ENCODE measurements at regions of chr6 and their contacts with region 1.

Region 1: DNA sequence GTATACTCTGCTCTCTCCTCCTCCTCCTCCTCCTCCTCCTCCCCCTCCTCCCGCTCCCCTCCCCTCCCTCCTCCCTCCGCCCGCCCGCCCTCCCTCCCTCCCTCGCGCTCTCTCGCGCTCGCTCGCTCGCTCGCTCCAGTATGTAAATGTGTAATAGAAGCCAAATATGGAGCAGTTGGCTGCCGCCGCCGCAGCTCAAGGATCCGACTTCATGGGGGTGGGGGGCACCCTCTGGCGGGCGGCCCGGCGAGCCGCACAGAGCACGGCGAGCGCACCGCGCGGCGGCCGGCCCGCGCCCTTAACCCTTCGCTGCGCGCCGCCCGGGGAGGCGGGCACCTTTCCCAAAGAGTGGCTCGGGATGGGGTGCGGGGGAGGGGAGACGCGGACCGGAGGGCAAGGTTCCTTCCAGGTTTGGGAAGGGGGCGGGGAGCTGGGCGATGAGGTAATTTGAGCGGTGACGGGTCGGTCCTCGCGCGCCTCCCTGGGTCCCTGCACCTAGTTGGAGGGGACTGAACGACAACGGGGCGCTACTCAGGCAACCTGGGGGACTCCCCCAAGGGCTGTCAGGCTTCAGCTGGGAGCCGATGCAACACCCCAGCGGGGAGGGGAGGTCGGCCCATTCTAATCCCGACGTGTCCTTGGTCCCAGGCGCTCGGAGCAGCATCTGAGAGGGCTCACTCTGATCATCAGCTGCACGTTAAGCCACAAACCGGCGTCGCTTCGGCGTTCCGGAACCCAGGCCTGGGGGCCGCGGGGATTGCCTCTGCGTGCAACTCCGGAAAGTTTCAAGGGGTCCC is 409 bp upstream of the ATXN1 start:
- DNase-seq: peak; percentile 84 to 90
- ATAC-seq: peak; percentile 49 to 70 (median 60)
- H3K4me3 ChIP-seq: peak overlapping the region; percentile 67 to 90 (median 86)
- H3K27ac ChIP-seq: peak overlapping the region; percentile 92 to 99 (median 98)
- H3K4me1 ChIP-seq: peaks cover 0 to 57% (median 39%) of the 10 kb centered on the region in 9 donors
- H3K27me3 ChIP-seq: no peaks in the 10 kb centered on the region
- CTCF ChIP-seq: peak in 7 of 9 donors; percentile 8 to 55 (median 30)

Region 2: GRCh38 chr6:16338577-16339262 is 422.9 kb before region 1 on chr6:
- intact Hi-C with region 1: loop called in 9 of 10 experiments (anchors 2 to 10 kb)
- DNase-seq: peak; percentile 51 to 54
- ATAC-seq: peak in 6 of 8 donors; percentile 19 to 53 (median 38)
- H3K4me3 ChIP-seq: no peak overlapping the region
- H3K27ac ChIP-seq: peak overlapping the region in 2 of 10 donors; percentile 23 to 31
- H3K4me1 ChIP-seq: peaks cover 11 to 71% (median 42%) of the 10 kb centered on the region in 9 donors
- H3K27me3 ChIP-seq: no peaks in the 10 kb centered on the region
- CTCF ChIP-seq: peak; percentile 11 to 64 (median 48)

Region 3: DNA sequence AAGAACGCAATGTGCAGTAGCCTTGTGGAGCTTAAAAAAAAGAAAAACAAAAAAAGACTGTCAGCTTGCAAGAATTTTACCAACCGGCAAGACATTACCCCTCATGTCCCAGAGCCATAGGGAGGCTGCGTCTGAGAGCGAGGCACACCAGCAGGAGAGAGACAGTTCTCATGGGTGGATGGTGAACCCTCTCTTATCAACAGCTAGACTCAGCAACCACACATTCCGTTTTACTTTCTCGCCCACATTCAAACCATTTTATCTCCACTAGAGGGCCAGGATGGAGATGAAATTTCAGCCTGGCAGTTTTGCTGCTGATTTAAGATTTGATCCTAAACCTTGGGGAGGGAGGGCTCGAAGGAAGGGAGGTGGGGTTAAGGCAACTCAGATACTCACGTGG is 247.4 kb before region 1 on chr6:
- intact Hi-C with region 1: loop called (anchors 2 to 10 kb)
- DNase-seq: no peak
- ATAC-seq: peak in 5 of 8 donors; percentile 10 to 51 (median 34)
- H3K4me3 ChIP-seq: no peak overlapping the region
- H3K27ac ChIP-seq: no peak overlapping the region
- H3K4me1 ChIP-seq: peaks cover 4 to 57% (median 39%) of the 10 kb centered on the region in 9 donors
- H3K27me3 ChIP-seq: no peaks in the 10 kb centered on the region
- CTCF ChIP-seq: peak in 7 of 9 donors; percentile 36 to 54 (median 51)

Region 4: DNA sequence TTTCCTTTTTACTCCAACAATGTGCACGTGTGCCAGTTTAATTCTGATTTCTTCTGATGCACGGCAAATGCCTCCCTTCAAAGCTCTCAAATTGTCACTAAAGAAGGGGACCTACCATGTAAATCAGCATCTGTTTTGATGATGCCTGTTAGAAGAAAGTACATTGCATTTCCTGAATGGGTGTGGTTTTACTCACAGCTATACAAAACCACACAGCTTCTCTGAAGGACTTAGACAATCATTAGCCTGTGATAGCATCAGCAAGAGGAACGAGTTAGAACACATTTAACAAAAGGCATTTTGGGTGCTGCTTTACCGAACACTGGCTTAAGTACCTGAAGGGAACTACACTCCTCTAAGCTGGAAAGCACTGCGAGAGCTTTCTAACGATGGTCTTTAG is 109.8 kb before region 1 on chr6:
- intact Hi-C with region 1: loop called in 2 of 10 experiments (anchors 10 kb)
- DNase-seq: no peak
- ATAC-seq: no peak
- H3K4me3 ChIP-seq: no peak overlapping the region
- H3K27ac ChIP-seq: peak overlapping the region in 1 of 10 donors; percentile 62
- H3K4me1 ChIP-seq: peaks cover 0 to 27% (median 0%) of the 10 kb centered on the region in 9 donors
- H3K27me3 ChIP-seq: no peaks in the 10 kb centered on the region
- CTCF ChIP-seq: no peak

Region 5: GRCh38 chr6:16684896-16685554 is 76.6 kb before region 1 on chr6:
- intact Hi-C with region 1: loop called in 1 of 10 experiments (anchors 10 kb)
- DNase-seq: no peak
- ATAC-seq: no peak
- H3K4me3 ChIP-seq: no peak overlapping the region
- H3K27ac ChIP-seq: peak overlapping the region in 1 of 10 donors; percentile 64
- H3K4me1 ChIP-seq: peaks cover 0 to 95% (median 27%) of the 10 kb centered on the region in 9 donors
- H3K27me3 ChIP-seq: no peaks in the 10 kb centered on the region
- CTCF ChIP-seq: no peak

Measured in heart right ventricle (tissue), 16 donors.